Adrenal gland (tissue), 19 donors: ENCODE measurements at regions of chr10 and their contacts with region 1.

Region 1: DNA sequence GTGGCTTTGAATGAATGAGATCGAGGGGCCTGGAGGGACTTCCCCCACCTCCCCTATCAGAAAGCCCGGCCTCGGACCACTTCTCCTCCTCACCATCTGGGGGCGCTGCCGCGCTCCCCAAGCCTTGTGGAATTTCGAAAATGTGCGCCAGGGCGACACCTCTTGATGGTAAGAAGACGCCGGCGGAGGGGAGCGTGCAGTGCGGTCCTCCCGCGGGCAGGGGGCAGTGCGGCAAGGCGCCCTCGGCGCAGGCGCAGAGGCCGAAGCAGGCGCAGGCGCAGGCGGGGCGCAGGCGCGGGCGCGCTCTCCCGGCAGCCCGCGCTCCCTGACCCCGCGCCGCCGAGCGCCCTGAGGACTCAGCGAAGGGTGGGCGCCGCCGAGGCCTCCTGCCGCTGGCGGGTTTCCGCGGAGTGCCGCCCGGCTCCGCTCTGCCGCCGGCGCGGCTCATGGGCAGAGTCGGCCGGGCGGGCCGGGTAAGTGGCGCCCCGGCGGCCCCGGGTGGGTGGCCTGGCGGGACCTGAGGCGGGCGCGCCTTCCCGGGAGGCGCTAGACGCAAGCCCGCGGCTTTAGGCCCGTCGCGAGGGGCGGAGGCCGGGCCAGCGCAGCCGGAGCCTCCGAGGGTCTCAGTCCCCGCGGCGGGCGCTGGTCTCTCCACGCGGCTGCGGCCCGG is at the start of gene RBM17:
- DNase-seq: peak; percentile 97 to 99 (median 98)
- H3K4me3 ChIP-seq: peak within 1 kb of the TSS; percentile 7 to 99 (median 81)
- H3K27ac ChIP-seq: peak within 1 kb of the TSS in 4 of 5 donors; percentile 80 to 97 (median 90)
- H3K4me1 ChIP-seq: peaks cover 17 to 47% of the 10 kb centered on the region in 2 donors
- H3K27me3 ChIP-seq: no peaks in the 10 kb centered on the region
- CTCF ChIP-seq: peak; percentile 99 to 100 (median 100)
- POLR2A ChIP-seq: peak; percentile 63 to 80
- total RNA-seq, gene RBM17: 31.9 to 72.1 (median 57.5) TPM

Region 2: DNA sequence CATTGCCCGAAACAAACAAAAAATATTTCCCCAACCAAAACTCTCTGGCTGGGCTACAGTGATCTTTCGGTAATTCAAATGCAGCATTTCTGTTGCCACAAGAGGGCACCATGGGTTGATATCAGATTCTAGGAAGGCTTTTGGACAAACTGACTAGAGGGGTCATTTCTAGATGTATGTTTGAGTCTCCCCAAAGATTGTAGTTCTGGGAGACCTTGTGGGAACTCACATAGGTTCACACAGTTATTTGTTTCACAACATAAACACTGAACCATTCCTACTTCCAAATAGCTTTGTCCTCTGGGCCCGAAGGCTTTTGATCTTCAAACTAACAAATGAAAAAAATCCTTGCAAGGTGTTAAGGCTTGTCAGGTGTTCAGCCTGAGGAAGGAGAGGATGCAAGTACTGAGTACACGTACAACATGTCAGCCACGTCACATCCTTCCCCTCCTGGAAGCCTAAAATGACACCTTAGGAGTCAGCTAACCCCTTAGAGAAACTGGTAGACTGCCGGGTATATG is 74.6 kb before region 1 on chr10:
- intact Hi-C with region 1: loop called in 1 of 2 experiments (anchors 10 kb)
- DNase-seq: peak; percentile 48 to 84 (median 56)
- H3K4me3 ChIP-seq: no peak overlapping the region
- H3K27ac ChIP-seq: no peak overlapping the region
- H3K4me1 ChIP-seq: no peaks in the 10 kb centered on the region
- H3K27me3 ChIP-seq: no peaks in the 10 kb centered on the region
- CTCF ChIP-seq: peak; percentile 56 to 77 (median 70)
- POLR2A ChIP-seq: no peak

Region 3: DNA sequence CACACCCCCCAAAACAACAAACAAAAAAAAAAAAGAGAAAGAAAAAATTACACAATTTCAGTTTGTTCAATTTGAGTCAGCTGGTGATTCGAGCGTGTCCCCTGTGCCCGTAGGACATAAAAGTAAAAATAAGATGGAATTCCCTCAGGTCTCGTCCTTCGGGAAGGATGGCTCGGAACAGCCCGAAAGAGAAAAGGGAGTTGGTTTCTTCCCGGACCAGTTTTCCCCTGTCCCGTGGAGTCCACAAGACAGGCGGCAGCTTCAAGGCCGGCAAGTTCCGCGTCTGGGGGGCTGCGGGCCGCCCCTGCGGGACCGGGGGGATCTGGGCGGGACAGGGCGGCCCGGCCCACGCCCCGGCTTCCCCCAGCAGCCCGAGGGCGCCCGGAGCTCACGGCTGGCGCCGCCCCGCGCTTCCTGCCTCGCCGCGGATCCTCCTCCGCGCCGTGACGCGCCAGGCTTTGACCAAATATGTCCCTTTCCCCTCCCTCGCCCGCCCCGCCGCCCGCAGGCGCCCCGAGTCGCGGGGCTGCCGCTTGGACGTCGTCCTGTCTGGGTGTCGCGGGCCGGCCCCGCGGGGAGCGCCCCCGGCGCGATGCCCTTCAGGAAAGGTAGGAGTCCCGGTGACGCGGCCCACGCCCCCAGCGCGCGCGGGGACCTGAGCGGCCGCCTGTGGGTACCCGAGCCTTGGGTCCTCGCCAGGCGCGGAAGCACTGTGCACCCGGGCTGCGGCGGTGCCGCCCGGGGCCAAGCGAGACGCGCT is 55.7 kb after region 1 on chr10:
- intact Hi-C with region 1: loop called in 1 of 2 experiments (anchors 10 kb)
- DNase-seq: peak; percentile 86 to 92 (median 89)
- H3K4me3 ChIP-seq: peak overlapping the region; percentile 51 to 82 (median 57)
- H3K27ac ChIP-seq: peak overlapping the region in 4 of 5 donors; percentile 65 to 97 (median 82)
- H3K4me1 ChIP-seq: peaks cover 11 to 12% of the 10 kb centered on the region in 2 donors
- H3K27me3 ChIP-seq: no peaks in the 10 kb centered on the region
- CTCF ChIP-seq: no peak
- POLR2A ChIP-seq: peak; percentile 26 to 75